HEK293 (cell line): ENCODE measurements at regions of chr11 and their contacts with region 1.

Region 1: DNA sequence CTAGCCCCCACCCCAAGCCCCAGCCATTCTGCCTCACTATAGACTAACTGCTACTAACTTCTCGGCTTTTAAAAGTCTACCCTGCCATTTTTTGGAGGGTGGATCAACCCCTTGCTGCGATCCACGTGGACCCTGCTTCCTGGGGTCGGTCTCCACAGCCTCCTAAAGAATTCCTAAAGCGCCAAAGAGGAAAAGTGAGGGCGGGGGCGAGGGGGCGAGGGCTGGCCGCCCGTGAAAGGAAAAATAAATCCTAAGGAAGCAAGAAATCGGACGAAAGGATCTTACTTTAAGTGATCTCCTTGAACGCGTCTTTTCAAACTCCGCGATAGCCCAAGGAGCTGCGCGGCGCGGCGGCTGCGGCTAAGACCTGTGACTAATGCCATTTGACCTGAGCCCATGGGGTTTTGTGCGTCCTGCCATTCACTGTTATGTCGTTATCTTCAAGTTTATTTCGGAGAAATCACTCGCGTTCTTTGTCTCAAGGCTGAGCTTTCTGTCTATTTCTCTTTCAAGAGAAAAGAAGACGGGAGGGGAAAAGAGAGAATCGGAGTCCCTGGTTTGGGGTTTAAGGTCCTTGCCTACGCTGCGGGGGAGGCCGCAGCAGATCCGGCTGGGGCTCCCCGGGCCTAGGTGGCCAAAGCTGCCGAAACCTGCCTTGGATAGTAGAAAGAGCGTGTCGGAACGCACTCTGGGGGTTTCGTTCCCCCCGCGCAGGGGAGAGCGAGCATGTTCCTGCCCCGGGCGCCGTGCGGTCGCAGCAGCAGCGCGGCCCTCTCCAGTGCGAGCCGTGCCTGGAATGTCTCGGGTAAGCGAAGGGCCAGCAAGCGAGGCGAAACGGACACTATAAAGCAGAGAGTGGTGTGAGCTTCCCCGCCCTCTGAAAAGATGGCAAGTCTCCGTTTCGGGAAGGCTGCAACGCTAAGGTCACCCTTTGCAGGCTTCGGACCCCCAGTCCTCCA is 2.8 kb upstream of the DBX1 start:
- H3K4me3 ChIP-seq: no peak overlapping the region
- H3K27ac ChIP-seq: no peak overlapping the region
- H3K4me1 ChIP-seq: no peaks in the 10 kb centered on the region; the same call in 1 of the 2 replicates
- CTCF ChIP-seq: no peak

Region 2: GRCh38 chr11:19962801-19963175 is 200.3 kb before region 1 on chr11:
- CTCF ChIA-PET with region 1: no interaction called
- POLR2A ChIA-PET with region 1: no interaction called
- H3K4me3 ChIP-seq: no peak overlapping the region
- H3K27ac ChIP-seq: no peak overlapping the region
- H3K4me1 ChIP-seq: no peaks in the 10 kb centered on the region
- CTCF ChIP-seq: no peak

Region 3: GRCh38 chr11:20056109-20056949 is 106.8 kb before region 1 on chr11:
- CTCF ChIA-PET with region 1: no interaction called
- POLR2A ChIA-PET with region 1: interaction called, 11 read pairs
- H3K4me3 ChIP-seq: no peak overlapping the region
- H3K27ac ChIP-seq: 0 out of 2 replicates have a peak overlapping the region, but pooled peaks have one; percentile 48
- H3K4me1 ChIP-seq: peaks cover 7% of the 10 kb centered on the region; the same call in 1 of the 2 replicates
- CTCF ChIP-seq: no peak

Region 4: GRCh38 chr11:20127671-20128527 is 35.2 kb before region 1 on chr11:
- CTCF ChIA-PET with region 1: no interaction called
- POLR2A ChIA-PET with region 1: no interaction called
- H3K4me3 ChIP-seq: no peak overlapping the region
- H3K27ac ChIP-seq: no peak overlapping the region
- H3K4me1 ChIP-seq: no peaks in the 10 kb centered on the region
- CTCF ChIP-seq: peak; percentile 69